ENCODE measurements at regions of chr17 and their contacts with region 1.

Region 1: GRCh38 chr17:66944351-66945139 is 20.0 kb upstream of the CACNG4 start:
- DNase-seq: peak; percentile 21
- H3K4me3 Mint-ChIP-seq: no peak overlapping the region
- H3K27ac Mint-ChIP-seq: no peak overlapping the region
- H3K4me1 Mint-ChIP-seq: peaks cover 34% of the 10 kb centered on the region
- H3K27me3 Mint-ChIP-seq: peaks cover 10% of the 10 kb centered on the region
- CTCF ChIP-seq: no peak

Region 2: GRCh38 chr17:66715745-66716156 is 228.8 kb before region 1 on chr17:
- CTCF ChIA-PET with region 1: no interaction called
- intact Hi-C with region 1: no loop called
- DNase-seq: peak; percentile 32
- H3K4me3 Mint-ChIP-seq: no peak overlapping the region
- H3K27ac Mint-ChIP-seq: no peak overlapping the region
- H3K4me1 Mint-ChIP-seq: peaks cover 36% of the 10 kb centered on the region
- H3K27me3 Mint-ChIP-seq: no peaks in the 10 kb centered on the region
- CTCF ChIP-seq: peak; percentile 21

Region 3: DNA sequence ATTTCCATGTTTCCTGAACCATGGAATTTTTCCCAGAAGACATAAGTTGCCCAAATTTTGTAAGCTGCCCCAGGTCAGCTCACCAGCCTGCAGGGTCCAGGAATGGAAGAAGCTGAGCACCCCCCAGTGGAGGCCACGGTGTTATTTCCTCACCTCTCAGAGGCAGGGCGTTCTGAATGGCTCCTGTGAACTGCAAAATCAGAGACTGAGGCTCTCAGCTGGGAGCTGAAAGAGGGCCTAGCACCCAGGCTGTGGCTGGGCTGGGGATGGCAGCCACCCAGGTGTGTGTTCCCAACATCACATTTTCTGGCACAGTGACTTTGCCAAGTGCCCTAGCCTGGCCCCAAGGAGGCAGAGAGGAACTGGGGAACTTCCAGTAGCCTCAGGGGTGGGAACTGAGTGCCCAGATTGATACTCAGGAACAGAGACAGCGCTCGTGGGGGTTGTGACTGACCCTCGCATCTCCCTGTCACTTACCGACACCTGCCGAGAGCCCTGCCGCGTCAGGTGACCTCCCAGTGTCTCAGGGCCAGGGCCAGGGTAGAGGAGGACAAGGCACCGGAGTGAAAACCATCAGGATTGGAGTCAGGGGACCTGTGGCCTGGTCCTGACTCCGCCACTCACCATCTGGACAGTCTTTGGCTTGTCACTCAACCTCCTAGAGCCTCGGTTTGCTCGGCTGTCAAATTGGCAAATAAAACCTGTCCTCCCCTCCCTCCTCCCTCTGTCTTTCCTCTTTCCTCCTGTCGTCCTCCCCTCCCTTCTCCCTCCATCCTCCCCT is 31.2 kb after region 1 on chr17:
- CTCF ChIA-PET with region 1: interaction called, 10 read pairs
- intact Hi-C with region 1: no loop called
- DNase-seq: peak; percentile 77
- H3K4me3 Mint-ChIP-seq: no peak overlapping the region
- H3K27ac Mint-ChIP-seq: no peak overlapping the region
- H3K4me1 Mint-ChIP-seq: no peaks in the 10 kb centered on the region
- H3K27me3 Mint-ChIP-seq: peaks cover 12% of the 10 kb centered on the region
- CTCF ChIP-seq: no peak

Region 4: DNA sequence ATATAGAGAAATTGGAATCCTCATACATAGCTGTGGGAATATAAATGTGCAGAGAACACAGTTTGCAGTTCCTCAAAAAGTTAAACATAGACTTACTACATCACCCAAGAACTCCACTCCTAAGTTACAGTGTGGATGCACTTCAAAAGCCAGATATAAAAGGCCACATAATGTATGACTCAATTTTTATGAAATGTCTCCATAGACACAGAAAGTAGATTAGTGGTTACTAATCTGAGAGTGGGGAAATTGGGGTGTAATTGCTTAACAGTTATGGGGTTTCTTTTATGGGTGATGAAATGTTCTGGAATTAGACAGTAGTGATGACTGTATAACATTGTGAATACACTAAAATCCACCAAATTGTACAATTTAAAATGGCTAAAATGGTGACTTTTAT is 160.7 kb after region 1 on chr17:
- CTCF ChIA-PET with region 1: no interaction called
- intact Hi-C with region 1: no loop called
- DNase-seq: no peak
- H3K4me3 Mint-ChIP-seq: no peak overlapping the region
- H3K27ac Mint-ChIP-seq: no peak overlapping the region
- H3K4me1 Mint-ChIP-seq: no peaks in the 10 kb centered on the region
- H3K27me3 Mint-ChIP-seq: no peaks in the 10 kb centered on the region
- CTCF ChIP-seq: no peak

Region 5: DNA sequence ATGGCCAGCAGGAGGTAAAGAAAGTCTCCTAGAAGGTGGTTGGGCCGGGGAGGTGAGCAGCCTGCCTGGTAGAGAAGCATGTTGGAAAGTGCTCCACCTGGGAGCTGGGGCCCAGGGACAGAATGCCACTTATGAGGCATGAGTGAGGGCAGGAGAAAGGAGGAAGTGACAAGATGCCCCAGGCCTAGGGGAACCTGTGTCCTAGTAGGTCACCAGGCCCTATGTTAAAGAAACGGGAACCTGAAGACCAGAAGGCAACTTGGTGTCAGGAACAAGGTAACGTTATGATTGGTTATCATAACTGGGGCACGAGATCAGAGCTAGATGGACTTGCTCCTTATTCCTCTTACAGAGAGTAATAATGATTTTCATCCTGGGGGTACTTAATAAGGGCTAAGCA is 466.9 kb after region 1 on chr17:
- CTCF ChIA-PET with region 1: no interaction called
- intact Hi-C with region 1: no loop called
- DNase-seq: no peak
- H3K4me3 Mint-ChIP-seq: no peak overlapping the region
- H3K27ac Mint-ChIP-seq: no peak overlapping the region
- H3K4me1 Mint-ChIP-seq: peaks cover 35% of the 10 kb centered on the region
- H3K27me3 Mint-ChIP-seq: no peaks in the 10 kb centered on the region
- CTCF ChIP-seq: no peak